Kidney (tissue), 22 donors: ENCODE measurements at regions of chr3 and their contacts with region 1.

Region 1: GRCh38 chr3:66276705-66277274 is 56.0 kb downstream of the SLC25A26 start:
- DNase-seq: peak in 4 of 5 donors; percentile 76 to 88 (median 81)
- H3K4me3 ChIP-seq: no peak overlapping the region
- H3K27ac ChIP-seq: no peak overlapping the region
- H3K4me1 ChIP-seq: no peaks in the 10 kb centered on the region
- H3K27me3 ChIP-seq: no peaks in the 10 kb centered on the region
- CTCF ChIP-seq: peak; percentile 78

Region 2: DNA sequence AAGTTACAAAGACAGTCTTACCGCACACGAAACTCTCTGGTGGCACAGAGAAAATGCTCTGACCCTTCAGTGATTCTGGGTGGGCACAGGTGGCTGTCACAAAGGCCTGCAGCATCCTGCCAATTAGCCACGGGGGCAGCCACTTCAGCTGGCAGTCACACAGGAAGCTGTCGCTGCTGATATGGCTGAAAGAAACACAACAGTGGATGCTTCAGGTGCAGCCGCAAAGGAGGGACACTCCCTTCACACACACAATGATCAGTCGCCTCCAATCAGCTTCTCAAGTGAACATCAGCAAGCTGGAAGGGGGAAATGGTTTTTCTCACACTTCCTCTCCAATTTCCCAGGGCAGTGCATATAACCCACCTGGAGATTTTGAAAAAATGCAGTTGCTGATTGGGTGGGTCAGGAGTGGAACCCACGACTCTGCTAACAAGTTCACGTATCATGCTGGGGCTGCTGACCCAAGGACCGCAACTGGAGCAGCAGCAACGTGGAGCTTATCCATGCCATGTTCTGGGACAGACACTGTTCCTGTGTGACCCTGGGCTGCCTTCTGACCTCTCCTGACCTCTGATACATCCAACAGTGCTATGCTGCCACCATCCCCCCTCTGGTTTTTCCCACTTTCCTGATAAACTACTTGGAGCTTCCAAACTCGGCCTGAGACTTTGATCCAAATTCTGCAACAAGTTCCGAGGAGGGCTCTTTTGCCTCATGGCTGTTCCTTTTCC is 117.4 kb after region 1 on chr3:
- intact Hi-C with region 1: no loop called
- DNase-seq: no peak
- H3K4me3 ChIP-seq: no peak overlapping the region
- H3K27ac ChIP-seq: no peak overlapping the region
- H3K4me1 ChIP-seq: peaks cover 0 to 4% (median 0%) of the 10 kb centered on the region in 3 donors
- H3K27me3 ChIP-seq: no peaks in the 10 kb centered on the region
- CTCF ChIP-seq: no peak

Region 3: GRCh38 chr3:66418475-66418931 is 141.7 kb after region 1 on chr3:
- intact Hi-C with region 1: no loop called
- DNase-seq: no peak
- H3K4me3 ChIP-seq: no peak overlapping the region
- H3K27ac ChIP-seq: no peak overlapping the region
- H3K4me1 ChIP-seq: no peaks in the 10 kb centered on the region
- H3K27me3 ChIP-seq: no peaks in the 10 kb centered on the region
- CTCF ChIP-seq: no peak

Region 4: DNA sequence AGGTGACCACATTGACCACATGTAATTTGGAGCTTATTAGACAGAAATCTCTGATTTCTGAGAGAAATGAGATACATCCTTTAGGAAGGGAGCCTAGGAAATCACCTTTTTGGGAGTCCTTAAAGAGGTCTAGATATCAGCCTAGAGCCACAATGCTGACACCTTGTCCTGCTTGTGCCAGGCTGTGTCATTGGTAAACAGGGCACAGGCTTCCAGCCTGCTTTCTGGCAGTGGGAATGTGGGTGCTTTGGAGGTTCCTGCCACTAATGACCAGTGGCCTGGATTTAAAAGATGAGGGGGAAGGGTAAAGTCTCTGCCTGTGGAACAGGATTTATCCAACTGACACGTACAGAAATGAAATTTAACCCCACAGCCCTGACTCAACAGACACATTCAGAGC is 551.5 kb after region 1 on chr3:
- intact Hi-C with region 1: loop called (anchors 5 kb)
- DNase-seq: no peak
- H3K4me3 ChIP-seq: no peak overlapping the region
- H3K27ac ChIP-seq: no peak overlapping the region
- H3K4me1 ChIP-seq: no peaks in the 10 kb centered on the region
- H3K27me3 ChIP-seq: no peaks in the 10 kb centered on the region
- CTCF ChIP-seq: no peak

Region 5: DNA sequence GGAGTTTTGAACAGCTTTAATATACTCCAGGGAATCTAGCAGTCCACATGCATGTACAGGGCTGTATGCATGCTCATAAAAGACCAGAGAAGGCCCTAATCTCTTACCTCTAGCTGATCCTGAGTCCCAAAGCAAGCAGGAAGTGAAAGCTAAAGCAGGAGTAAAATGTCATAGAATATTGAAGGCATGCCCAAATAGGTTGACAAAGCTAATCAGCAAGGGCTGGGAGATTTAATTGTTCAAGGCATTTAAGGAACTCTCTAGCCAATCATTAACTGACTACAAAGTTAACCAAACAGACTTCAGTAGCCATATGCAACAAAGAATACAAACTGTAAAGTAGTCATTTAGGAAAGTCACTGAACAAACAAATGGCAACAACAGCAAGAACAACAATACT is 635.5 kb after region 1 on chr3:
- intact Hi-C with region 1: no loop called
- DNase-seq: no peak
- H3K4me3 ChIP-seq: no peak overlapping the region
- H3K27ac ChIP-seq: no peak overlapping the region
- H3K4me1 ChIP-seq: no peaks in the 10 kb centered on the region
- H3K27me3 ChIP-seq: no peaks in the 10 kb centered on the region
- CTCF ChIP-seq: no peak